Naive thymus-derived CD4-positive, alpha-beta T cell (primary cell): ENCODE measurements at regions of chr1 and their contacts with region 1.

Region 1: GRCh38 chr1:226062558-226063223 is at the start of gene H3-3A:
- DNase-seq: peak; percentile 97 to 99 (median 98)
- ATAC-seq: peak; percentile 93
- H3K4me3 ChIP-seq: peak within 1 kb of the TSS; percentile 80
- H3K4me3 Mint-ChIP-seq: peak within 1 kb of the TSS; percentile 99 to 100 (median 100)
- H3K27ac ChIP-seq: peak within 1 kb of the TSS; percentile 97
- H3K27ac Mint-ChIP-seq: peak within 1 kb of the TSS; percentile 99 to 100 (median 100)
- H3K4me1 ChIP-seq: peaks cover 24 to 31% of the 10 kb centered on the region in 2 donors
- H3K4me1 Mint-ChIP-seq: peaks cover 34 to 63% (median 51%) of the 10 kb centered on the region in 7 donors
- H3K27me3 ChIP-seq: no peaks in the 10 kb centered on the region
- H3K27me3 Mint-ChIP-seq: no peaks in the 10 kb centered on the region
- total RNA-seq, gene H3-3A: 388 to 561 (median 412) TPM

Region 2: GRCh38 chr1:225447650-225448089 is 615.0 kb before region 1 on chr1:
- CTCF ChIA-PET with region 1: no interaction called
- POLR2A ChIA-PET with region 1: interaction called, 12 read pairs
- intact Hi-C with region 1: loop called (anchors 1 to 5 kb)
- DNase-seq: no peak
- ATAC-seq: no peak
- H3K4me3 ChIP-seq: no peak overlapping the region
- H3K4me3 Mint-ChIP-seq: peak overlapping the region in 2 of 10 donors; percentile 16 to 56
- H3K27ac ChIP-seq: no peak overlapping the region
- H3K27ac Mint-ChIP-seq: peak overlapping the region in 8 of 9 donors; percentile 21 to 94 (median 55)
- H3K4me1 ChIP-seq: peaks cover 21 to 37% of the 10 kb centered on the region in 2 donors
- H3K4me1 Mint-ChIP-seq: peaks cover 51 to 72% (median 62%) of the 10 kb centered on the region in 7 donors
- H3K27me3 ChIP-seq: no peaks in the 10 kb centered on the region
- H3K27me3 Mint-ChIP-seq: peaks cover 0 to 2% (median 0%) of the 10 kb centered on the region in 5 donors

Region 3: GRCh38 chr1:225896937-225897549 is 165.6 kb before region 1 on chr1:
- CTCF ChIA-PET with region 1: no interaction called
- POLR2A ChIA-PET with region 1: interaction called, 19 read pairs
- intact Hi-C with region 1: loop called in 1 of 2 experiments (anchors 1 kb)
- DNase-seq: peak in 8 of 9 donors; percentile 70 to 92 (median 88)
- ATAC-seq: peak; percentile 97
- H3K4me3 ChIP-seq: peak overlapping the region; percentile 50
- H3K4me3 Mint-ChIP-seq: peak overlapping the region; percentile 74 to 89 (median 84)
- H3K27ac ChIP-seq: peak overlapping the region; percentile 85
- H3K27ac Mint-ChIP-seq: peak overlapping the region; percentile 89 to 100 (median 97)
- H3K4me1 ChIP-seq: peaks cover 35 to 45% of the 10 kb centered on the region in 2 donors
- H3K4me1 Mint-ChIP-seq: peaks cover 36 to 67% (median 54%) of the 10 kb centered on the region in 7 donors
- H3K27me3 ChIP-seq: no peaks in the 10 kb centered on the region
- H3K27me3 Mint-ChIP-seq: peaks cover 0 to 47% (median 0%) of the 10 kb centered on the region in 5 donors

Region 4: DNA sequence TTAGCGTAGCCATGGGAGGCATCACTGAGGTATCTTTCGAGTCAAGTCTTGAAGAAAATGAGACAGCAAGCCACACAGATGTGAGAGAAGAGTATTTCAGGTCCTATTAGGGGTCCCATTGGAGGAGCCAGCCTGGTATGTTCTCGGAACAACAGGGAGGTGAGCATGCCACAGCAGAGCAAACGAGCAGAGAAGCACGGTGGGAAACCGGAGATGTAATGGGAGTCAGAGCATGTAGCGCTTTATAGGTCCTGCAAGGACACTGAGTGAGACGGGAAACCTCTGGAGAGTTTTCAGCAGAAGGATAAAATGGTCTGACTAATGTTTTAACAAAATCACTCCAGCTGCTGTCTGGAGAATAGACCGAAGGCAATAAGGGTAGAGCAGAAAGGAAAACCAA is 15.7 kb after region 1 on chr1:
- CTCF ChIA-PET with region 1: interaction called, 14 read pairs
- POLR2A ChIA-PET with region 1: interaction called, 41 read pairs
- intact Hi-C with region 1: loop called (anchors 1 kb)
- DNase-seq: no peak
- ATAC-seq: no peak
- H3K4me3 ChIP-seq: no peak overlapping the region
- H3K4me3 Mint-ChIP-seq: no peak overlapping the region
- H3K27ac ChIP-seq: no peak overlapping the region
- H3K27ac Mint-ChIP-seq: no peak overlapping the region
- H3K4me1 ChIP-seq: peaks cover 5 to 8% of the 10 kb centered on the region in 2 donors
- H3K4me1 Mint-ChIP-seq: peaks cover 6 to 21% (median 9%) of the 10 kb centered on the region in 7 donors
- H3K27me3 ChIP-seq: no peaks in the 10 kb centered on the region
- H3K27me3 Mint-ChIP-seq: peaks cover 0 to 7% (median 0%) of the 10 kb centered on the region in 5 donors

Region 5: DNA sequence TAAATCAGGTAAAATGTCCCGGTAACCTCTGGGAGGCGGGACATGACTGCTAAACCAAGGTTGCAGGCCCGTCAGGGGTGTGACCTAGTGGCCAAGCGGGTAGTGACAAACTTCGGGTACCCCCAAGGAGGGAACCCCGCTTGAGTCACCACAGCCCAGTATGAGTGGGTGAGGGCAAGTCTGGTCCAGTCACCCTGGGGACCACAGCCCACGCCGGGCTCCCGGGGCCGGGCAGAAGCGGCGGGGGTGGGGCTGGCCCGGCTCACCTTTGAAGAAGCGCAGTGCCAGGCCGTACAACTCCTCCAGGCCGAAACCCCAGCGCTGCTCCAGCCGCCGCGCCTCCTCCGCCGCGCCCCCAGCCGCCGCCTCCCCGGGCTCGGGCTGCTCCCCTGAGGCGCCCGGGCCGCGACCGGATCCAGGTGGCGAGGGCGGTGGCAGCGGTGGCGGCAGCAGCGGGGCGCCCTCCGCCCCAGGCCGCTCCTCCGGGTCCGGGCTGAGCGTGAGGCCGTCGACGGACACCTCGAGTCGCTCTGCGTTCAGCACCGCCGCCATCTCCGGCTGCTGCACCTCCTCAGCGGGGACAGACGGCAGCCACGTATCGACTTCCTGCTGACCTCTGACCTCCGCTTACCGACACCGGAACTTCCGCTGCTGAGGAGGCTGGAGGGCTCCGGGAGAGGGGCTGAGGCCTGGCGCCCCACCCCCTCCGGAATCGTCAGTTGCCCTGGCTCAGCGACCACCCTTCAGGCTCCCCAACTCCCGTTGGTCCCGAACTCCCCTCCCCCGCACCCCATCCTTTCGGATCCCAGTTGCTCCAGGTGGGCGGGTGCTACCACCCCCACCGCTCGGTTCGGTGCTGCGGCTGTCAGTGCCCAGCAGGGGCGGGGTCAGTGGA is 123.7 kb after region 1 on chr1 and contains the start of gene ACBD3:
- CTCF ChIA-PET with region 1: interaction called, 3 read pairs
- POLR2A ChIA-PET with region 1: interaction called, 4 read pairs
- intact Hi-C with region 1: loop called (anchors 1 kb)
- DNase-seq: peak; percentile 66 to 87 (median 83)
- ATAC-seq: peak; percentile 96
- H3K4me3 ChIP-seq: peak within 1 kb of the TSS; percentile 97
- H3K4me3 Mint-ChIP-seq: peak within 1 kb of the TSS; percentile 91 to 99 (median 94)
- H3K27ac ChIP-seq: peak within 1 kb of the TSS; percentile 84
- H3K27ac Mint-ChIP-seq: peak within 1 kb of the TSS; percentile 88 to 98 (median 94)
- H3K4me1 ChIP-seq: peaks cover 23 to 30% of the 10 kb centered on the region in 2 donors
- H3K4me1 Mint-ChIP-seq: peaks cover 28 to 44% (median 36%) of the 10 kb centered on the region in 7 donors
- H3K27me3 ChIP-seq: no peaks in the 10 kb centered on the region
- H3K27me3 Mint-ChIP-seq: no peaks in the 10 kb centered on the region
- total RNA-seq, gene ACBD3: 19.6 to 29.9 (median 26.1) TPM

Region 6: DNA sequence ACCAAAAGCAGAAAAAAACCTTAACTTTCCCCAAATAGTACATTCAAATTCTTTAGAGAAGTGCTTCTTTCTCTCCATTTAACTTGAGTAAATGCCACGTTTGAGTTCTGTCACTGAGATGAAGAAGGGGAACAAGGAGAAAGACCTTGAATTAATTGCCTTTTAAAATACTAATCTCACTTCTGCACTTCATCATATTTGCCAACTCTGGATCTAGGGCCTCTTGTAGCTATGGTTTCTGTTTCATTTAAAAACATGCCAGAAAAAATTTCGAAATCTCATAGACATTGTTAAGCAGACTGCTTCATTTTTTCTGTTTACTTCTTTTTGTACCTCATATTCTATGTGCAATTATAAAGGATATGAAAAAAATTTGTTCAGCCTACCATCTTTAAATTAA is 185.4 kb after region 1 on chr1:
- CTCF ChIA-PET with region 1: no interaction called
- POLR2A ChIA-PET with region 1: no interaction called
- intact Hi-C with region 1: no loop called
- DNase-seq: no peak
- ATAC-seq: no peak
- H3K4me3 ChIP-seq: no peak overlapping the region
- H3K4me3 Mint-ChIP-seq: no peak overlapping the region
- H3K27ac ChIP-seq: no peak overlapping the region
- H3K27ac Mint-ChIP-seq: no peak overlapping the region
- H3K4me1 ChIP-seq: no peaks in the 10 kb centered on the region
- H3K4me1 Mint-ChIP-seq: peaks cover 0 to 2% (median 0%) of the 10 kb centered on the region in 7 donors
- H3K27me3 ChIP-seq: no peaks in the 10 kb centered on the region
- H3K27me3 Mint-ChIP-seq: no peaks in the 10 kb centered on the region

Region 7: GRCh38 chr1:226360106-226360746 is 297.5 kb after region 1 on chr1:
- CTCF ChIA-PET with region 1: no interaction called
- POLR2A ChIA-PET with region 1: no interaction called
- intact Hi-C with region 1: no loop called
- DNase-seq: no peak
- ATAC-seq: no peak
- H3K4me3 ChIP-seq: no peak overlapping the region
- H3K4me3 Mint-ChIP-seq: no peak overlapping the region
- H3K27ac ChIP-seq: no peak overlapping the region
- H3K27ac Mint-ChIP-seq: no peak overlapping the region
- H3K4me1 ChIP-seq: no peaks in the 10 kb centered on the region
- H3K4me1 Mint-ChIP-seq: no peaks in the 10 kb centered on the region
- H3K27me3 ChIP-seq: no peaks in the 10 kb centered on the region
- H3K27me3 Mint-ChIP-seq: no peaks in the 10 kb centered on the region

Region 8: DNA sequence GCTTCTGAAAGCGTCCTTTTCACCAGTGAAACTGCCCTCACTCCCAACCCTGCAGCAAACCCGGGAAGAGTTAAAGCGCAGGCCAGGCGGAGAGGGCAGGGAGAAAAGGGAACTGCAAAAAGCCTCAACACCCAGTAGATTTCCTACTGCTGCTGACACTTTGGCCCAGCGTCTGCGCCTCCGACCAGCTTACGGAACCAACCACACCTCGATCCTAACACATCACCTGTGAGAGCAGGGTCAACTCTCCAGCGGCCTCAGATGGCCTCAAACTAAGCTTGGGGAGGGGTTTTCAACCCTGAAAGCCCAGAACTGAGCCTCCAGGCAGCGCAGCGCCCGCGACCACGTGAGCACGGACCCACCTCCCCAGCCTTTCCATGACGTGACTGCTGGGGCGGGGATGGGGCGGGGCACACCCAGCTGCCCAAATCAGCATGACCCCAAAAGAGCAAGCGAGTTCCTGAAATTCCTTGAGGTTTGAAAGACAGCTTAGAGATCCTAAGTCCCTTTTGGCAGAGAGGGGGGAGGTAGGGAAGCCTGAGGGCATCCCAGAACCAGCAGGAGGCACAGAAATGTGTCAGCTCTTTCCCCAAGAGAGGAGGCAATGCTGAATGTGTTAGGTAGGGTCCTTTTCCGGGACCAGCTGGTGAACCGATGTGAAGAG is 617.3 kb after region 1 on chr1:
- CTCF ChIA-PET with region 1: no interaction called
- POLR2A ChIA-PET with region 1: no interaction called
- intact Hi-C with region 1: loop called in 1 of 2 experiments (anchors 10 kb)
- DNase-seq: peak; percentile 42 to 89 (median 75)
- ATAC-seq: peak; percentile 58
- H3K4me3 ChIP-seq: peak overlapping the region; percentile 40
- H3K4me3 Mint-ChIP-seq: peak overlapping the region; percentile 80 to 90 (median 82)
- H3K27ac ChIP-seq: peak overlapping the region; percentile 86
- H3K27ac Mint-ChIP-seq: peak overlapping the region; percentile 95 to 100 (median 99)
- H3K4me1 ChIP-seq: peaks cover 86 to 97% of the 10 kb centered on the region in 2 donors
- H3K4me1 Mint-ChIP-seq: peaks cover 83 to 100% (median 99%) of the 10 kb centered on the region in 7 donors
- H3K27me3 ChIP-seq: no peaks in the 10 kb centered on the region
- H3K27me3 Mint-ChIP-seq: peaks cover 0 to under 1% (median 0%) of the 10 kb centered on the region in 5 donors